Left ventricle myocardium inferior (tissue), 1 donor: ENCODE measurements at regions of chr15 and their contacts with region 1.

Region 1: DNA sequence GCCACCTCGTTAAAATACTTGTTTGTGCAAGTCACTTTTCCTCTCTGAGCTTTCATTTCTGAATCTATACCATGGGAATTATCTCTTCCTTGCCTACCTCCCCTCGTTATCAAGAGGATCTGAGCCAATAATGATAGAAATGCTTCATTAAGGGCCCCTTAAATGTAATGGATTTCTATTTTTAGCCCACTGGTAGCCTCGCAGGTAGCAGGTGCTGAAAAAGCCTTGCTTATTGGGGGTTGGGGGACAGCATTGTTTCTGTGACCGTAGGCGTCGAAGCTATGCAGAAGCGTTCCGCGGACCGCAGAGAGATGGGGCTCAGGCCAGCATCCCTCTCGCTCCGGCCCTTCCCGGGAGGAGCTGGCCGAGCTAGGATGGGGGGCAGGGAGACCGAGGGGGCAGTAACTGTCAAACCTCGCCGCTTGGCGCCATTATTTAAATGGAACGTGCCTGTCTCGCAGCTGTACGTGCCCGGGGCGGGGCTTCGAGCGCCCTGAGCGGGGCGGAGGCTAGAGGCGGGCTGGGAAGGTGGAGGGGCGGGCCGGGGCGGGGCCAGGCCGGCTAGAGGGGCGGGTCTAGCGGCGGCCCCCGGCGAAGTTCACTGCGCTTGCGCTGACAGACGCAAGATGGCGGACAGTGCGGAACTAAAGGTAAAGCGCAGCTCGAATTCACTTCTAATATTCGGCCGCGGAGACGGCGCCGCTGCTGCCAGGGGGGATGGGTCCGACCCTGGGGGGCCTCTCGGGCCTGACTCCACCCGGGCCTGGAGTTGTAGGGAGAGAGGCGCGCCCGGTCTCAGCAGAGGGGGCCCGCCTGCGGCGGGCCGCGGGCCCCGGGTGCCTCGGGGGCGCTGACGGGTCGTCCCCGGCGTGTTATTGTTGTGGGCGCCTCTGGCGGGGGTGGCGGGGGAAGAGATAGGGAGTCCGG is at the start of gene PIAS1:
- DNase-seq: peak; percentile 95
- H3K4me3 ChIP-seq: peak within 1 kb of the TSS; percentile 98
- H3K27ac ChIP-seq: peak within 1 kb of the TSS; percentile 92
- H3K4me1 ChIP-seq: peaks cover 50% of the 10 kb centered on the region
- H3K27me3 ChIP-seq: no peaks in the 10 kb centered on the region
- CTCF ChIP-seq: no peak
- total RNA-seq, gene PIAS1: 29.9 TPM

Region 2: DNA sequence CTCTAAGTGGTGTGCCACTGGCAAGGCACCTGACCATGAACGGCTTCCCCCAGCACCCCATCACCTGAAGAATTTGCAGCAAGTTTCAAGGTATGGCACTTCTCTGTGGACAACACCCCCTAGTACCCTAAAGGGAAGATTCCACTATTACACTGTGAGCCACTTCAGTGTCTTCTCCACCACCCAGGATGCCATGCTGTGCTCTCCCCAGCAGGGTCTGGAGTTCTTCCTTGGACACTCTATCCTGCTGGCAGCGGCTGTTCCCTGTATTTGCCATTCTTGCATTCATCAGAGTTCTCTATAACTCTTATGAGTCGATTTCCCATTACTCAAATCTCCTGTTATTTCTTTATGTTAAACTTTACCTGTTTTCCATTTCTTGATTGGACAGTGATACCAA is 180.2 kb before region 1 on chr15:
- intact Hi-C with region 1: loop called (anchors 5 kb)
- DNase-seq: no peak
- H3K4me3 ChIP-seq: no peak overlapping the region
- H3K27ac ChIP-seq: no peak overlapping the region
- H3K4me1 ChIP-seq: no peaks in the 10 kb centered on the region
- H3K27me3 ChIP-seq: no peaks in the 10 kb centered on the region
- CTCF ChIP-seq: no peak

Region 3: DNA sequence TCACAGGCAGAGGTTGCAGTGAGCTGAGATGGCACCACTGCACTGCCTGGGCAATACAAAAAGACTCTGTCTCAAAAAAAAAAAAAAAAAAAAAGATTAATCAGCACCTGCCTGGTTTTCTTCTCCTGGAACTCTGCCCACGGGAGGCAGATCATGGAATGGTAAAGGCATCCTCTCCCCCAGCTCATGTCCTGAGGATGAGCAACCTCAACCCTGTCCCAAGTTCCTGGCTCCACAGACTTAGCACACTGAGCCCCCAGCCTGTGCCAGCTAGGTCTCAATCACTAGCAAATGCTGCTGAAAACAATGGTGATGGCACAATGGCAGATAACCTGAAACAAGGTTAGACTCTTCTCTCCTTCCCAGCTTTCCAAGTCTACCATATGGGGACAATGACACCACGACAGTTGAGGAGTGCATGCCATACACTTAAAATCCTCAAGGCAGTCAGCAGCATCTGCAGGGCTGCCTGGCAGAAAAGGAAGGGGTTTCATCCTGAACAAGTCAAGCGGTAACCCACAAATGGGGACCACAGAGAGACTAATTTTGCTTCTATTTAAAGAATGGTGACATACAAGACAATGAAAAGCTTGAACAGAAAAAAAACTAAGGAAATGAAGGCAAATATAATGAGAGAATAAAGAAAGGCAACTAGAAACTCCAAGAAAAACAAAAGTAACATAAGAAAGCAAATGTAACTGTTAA is 170.7 kb after region 1 on chr15:
- intact Hi-C with region 1: no loop called
- DNase-seq: no peak
- H3K4me3 ChIP-seq: no peak overlapping the region
- H3K27ac ChIP-seq: no peak overlapping the region
- H3K4me1 ChIP-seq: peaks cover 18% of the 10 kb centered on the region
- H3K27me3 ChIP-seq: no peaks in the 10 kb centered on the region
- CTCF ChIP-seq: no peak